ENCODE measurements at regions of chr22 and their contacts with region 1.

Region 1: DNA sequence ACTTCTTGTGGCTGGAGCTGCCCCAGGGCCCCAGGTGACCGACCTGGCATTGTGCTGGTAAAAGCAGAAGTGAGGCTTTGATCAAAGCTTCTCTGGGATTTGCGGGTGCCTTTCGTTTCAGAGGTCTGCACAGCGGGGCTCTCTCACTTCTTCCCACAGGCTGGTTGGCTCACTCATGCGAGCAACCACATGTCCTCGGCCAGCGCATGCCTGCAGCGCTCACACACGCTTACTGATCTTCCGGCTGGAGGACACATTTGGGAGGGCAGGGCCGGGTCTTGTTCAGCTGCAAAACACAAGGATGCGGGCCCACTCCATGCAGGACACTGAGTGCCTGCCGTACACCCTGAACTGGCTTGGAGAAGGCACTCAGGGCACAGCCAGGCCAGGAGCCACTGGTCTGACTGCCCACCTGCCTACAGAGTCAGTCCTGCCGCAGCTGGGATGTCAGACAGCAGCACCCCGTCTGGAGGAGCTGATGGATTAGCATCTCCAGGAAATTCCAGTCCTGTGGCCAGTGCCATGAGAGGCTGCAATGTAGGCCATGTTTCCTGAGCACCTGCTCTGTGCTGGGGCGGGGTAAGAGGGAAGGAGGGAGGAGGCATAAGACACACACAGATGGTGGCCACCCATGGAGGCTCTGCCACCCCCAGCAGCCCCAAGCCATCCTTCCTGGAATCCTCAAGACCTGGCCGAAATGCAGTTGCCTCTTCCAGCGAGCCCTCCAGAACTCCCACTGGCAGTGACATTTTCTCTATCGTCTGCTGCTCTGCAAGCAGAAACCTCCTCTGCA is 1383.2 kb downstream of the BRD1 start:
- DNase-seq: peak; percentile 44
- ATAC-seq: peak; percentile 54
- H3K4me3 ChIP-seq: no peak overlapping the region
- H3K27ac ChIP-seq: no peak overlapping the region
- H3K4me1 ChIP-seq: no peaks in the 10 kb centered on the region
- H3K27me3 ChIP-seq: no peaks in the 10 kb centered on the region
- CTCF ChIP-seq: no peak
- EP300 ChIP-seq: no peak
- POLR2A ChIP-seq: no peak
- RAD21 ChIP-seq: no peak

Region 2: DNA sequence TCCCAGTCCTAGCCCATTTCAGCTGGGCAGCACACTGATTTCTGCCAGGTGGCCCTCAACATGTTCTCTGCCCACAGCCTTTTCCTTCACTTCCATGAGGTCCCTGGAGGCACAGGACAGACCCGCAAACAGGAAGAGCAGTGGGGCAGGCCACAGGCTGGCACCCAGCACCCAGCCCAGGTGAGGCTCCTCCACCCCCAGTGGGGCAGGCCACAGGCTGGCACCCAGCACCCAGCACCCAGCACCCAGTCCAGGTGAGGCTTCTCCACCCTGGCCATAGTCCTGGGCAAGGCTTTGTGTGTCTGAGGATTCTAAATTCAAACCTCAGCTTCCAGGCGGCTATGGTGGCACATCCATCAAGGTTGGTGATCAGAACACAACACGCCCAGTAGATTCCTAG is 29.9 kb before region 1 on chr22:
- CTCF ChIA-PET with region 1: no interaction called
- POLR2A ChIA-PET with region 1: no interaction called
- RAD21 ChIA-PET with region 1: no interaction called
- SMC1A ChIA-PET with region 1: no interaction called
- in situ Hi-C with region 1: loop called (anchors 5 kb)
- intact Hi-C with region 1: no loop called
- DNase-seq: no peak
- ATAC-seq: no peak
- H3K4me3 ChIP-seq: no peak overlapping the region
- H3K27ac ChIP-seq: no peak overlapping the region
- H3K4me1 ChIP-seq: no peaks in the 10 kb centered on the region
- H3K27me3 ChIP-seq: no peaks in the 10 kb centered on the region
- CTCF ChIP-seq: no peak
- EP300 ChIP-seq: no peak
- POLR2A ChIP-seq: no peak
- RAD21 ChIP-seq: no peak

Region 3: GRCh38 chr22:48881326-48881980 is 436.9 kb after region 1 on chr22:
- CTCF ChIA-PET with region 1: no interaction called
- POLR2A ChIA-PET with region 1: no interaction called
- RAD21 ChIA-PET with region 1: no interaction called
- SMC1A ChIA-PET with region 1: no interaction called
- in situ Hi-C with region 1: no loop called
- intact Hi-C with region 1: no loop called
- DNase-seq: no peak
- ATAC-seq: no peak
- H3K4me3 ChIP-seq: no peak overlapping the region
- H3K27ac ChIP-seq: no peak overlapping the region
- H3K4me1 ChIP-seq: no peaks in the 10 kb centered on the region
- H3K27me3 ChIP-seq: no peaks in the 10 kb centered on the region
- CTCF ChIP-seq: no peak
- EP300 ChIP-seq: no peak
- POLR2A ChIP-seq: no peak
- RAD21 ChIP-seq: no peak

Measured in GM12878 (cell line).